Right ventricle myocardium superior (tissue), 1 donor: ENCODE measurements at regions of chr16 and their contacts with region 1.

Region 1: DNA sequence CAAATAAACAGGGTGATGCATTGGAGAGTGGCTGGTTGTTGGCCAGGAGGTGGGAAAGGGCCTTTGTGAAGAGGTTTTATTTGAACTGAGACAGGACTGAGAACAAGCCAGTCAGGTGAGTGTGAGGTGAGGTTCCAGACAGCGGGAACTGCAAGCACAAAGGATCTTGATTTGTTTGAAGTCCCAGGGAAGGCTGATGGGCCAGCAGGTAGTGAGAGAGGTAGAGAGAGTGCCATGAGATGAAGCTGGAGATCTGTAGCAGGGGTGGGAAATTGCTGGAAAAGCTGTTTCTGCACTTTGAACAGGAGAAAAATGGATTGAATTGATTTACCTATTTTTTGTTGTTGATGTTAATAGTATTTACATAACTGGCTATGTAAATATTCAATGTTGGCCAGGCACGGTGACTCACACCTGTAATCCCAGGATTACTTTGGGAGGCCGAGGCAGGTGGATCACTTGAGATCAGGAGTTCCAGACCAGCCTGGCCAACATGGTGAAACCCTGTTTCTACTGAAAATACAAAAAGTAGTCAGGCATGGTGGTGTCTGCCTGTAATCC is 7.7 kb upstream of the DCTPP1 start:
- DNase-seq: no peak
- ATAC-seq: no peak

Region 2: GRCh38 chr16:30615358-30616091 is 178.0 kb after region 1 on chr16:
- intact Hi-C with region 1: loop called (anchors 5 kb)
- DNase-seq: peak; percentile 60
- ATAC-seq: peak; percentile 66